ENCODE measurements at regions of chr2 and their contacts with region 1.

Region 1: GRCh38 chr2:240343176-240343947 is 92.1 kb upstream of the GPC1 start:
- DNase-seq: no peak
- H3K4me3 ChIP-seq: no peak overlapping the region
- H3K27ac ChIP-seq: no peak overlapping the region
- H3K4me1 ChIP-seq: no peaks in the 10 kb centered on the region
- H3K27me3 ChIP-seq: no peaks in the 10 kb centered on the region
- CTCF ChIP-seq: peak in 1 of 2 donors; percentile 16

Region 2: DNA sequence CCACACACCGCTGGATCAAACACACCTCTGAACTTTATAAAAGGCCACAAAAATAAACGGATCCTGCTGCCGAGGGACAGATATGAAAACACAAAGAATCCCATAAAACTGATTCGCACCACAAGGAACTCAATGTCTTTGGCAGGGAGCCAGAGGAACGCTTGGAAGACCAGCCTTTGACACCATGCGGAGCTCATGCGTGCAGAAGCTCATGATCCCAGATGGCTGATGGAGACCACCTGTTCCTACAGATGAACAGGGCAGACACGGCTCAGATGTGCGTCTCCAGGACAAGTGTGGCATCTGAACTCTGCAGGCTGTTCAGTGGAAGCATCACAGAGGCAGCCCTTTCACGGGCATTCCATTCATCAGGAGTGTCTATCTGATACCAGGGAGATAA is 232.1 kb before region 1 on chr2:
- CTCF ChIA-PET with region 1: no interaction called
- dilution Hi-C with region 1: no loop called
- in situ Hi-C with region 1: no loop called
- intact Hi-C with region 1: no loop called
- DNase-seq: no peak
- H3K4me3 ChIP-seq: no peak overlapping the region
- H3K27ac ChIP-seq: no peak overlapping the region
- H3K4me1 ChIP-seq: no peaks in the 10 kb centered on the region
- H3K27me3 ChIP-seq: peaks cover 4% of the 10 kb centered on the region
- CTCF ChIP-seq: no peak

Region 3: DNA sequence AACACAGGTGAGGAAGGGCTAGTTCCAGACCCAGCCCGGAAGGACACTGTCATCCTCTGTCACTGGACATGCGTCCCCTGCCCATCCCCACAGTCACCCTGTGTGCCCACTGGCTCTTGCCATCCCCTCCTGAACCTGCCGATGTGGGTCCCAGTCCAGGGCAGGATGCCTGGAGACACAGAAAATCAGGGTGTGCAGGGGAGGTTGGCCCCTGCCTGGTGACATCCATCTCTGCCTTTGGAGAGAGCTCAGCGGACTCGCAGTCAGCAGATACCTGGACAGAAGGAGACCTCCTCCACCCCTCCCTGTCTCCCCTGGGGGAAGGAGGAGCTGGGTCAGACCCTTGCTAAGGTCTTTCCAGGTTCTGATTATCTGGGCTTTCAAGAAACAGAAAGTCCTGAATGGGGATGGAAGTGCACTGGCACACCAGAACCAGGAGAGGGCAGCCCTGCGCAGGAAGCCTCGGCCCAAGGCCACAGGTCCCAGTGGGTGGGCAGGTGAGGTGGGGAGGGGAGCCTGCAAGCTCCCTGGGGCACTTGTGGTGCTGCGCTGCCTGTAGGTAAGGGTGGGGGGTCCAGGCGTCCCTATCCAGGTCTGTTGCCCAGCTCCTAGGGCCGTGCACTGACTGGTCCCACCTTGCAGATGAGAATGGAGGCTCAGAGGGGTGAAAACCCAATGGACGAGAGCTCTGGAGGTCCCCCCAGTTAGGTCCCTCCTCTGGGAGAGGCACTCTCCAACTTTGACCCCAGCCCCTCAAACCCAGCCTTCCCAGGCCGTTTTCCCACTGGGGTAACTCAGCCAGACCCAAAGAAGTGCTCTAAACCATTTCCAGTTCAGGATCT is 193.2 kb before region 1 on chr2:
- CTCF ChIA-PET with region 1: no interaction called
- dilution Hi-C with region 1: no loop called
- in situ Hi-C with region 1: no loop called
- intact Hi-C with region 1: loop called (anchors 2 kb)
- DNase-seq: no peak
- H3K4me3 ChIP-seq: no peak overlapping the region
- H3K27ac ChIP-seq: no peak overlapping the region
- H3K4me1 ChIP-seq: no peaks in the 10 kb centered on the region
- H3K27me3 ChIP-seq: peaks cover 3% of the 10 kb centered on the region
- CTCF ChIP-seq: peak; percentile 80 to 94

Region 4: DNA sequence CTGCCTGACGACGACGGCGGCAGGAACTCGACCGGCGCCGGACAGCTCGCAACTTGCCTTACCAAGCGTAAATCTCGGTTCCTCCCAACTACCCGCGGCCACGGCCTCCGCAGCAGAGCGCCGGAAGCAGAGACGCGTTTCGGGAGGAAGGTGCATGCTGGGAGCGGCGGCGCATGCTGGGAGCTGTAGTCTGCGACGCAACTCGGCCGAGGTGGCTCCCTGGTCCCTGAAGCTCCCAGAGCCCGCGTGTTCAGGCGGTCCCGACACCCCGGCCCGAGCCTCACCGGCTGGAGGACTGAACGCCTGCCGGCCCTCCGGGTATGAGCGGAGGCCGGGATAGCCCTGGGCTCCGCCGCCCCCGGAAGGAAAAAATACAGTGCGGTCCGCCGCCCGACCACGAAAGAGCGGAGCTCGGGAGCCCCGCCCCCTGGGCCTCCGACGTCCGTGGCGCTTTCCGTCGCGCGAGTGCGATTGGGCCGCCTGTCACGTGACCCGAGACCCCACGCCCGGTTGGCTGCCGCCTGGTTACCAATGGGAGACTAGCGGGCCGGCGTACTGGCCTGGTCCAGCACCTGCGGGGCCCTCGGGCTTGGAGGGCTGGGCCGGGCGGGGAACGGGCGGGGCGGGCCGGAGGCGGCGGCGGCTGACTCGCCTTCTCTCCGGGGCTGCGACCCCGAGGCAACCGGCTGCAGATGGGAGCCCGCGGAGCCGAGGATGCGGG is 243.0 kb after region 1 on chr2 and contains the start of gene CAPN10:
- CTCF ChIA-PET with region 1: no interaction called
- dilution Hi-C with region 1: no loop called
- in situ Hi-C with region 1: no loop called
- intact Hi-C with region 1: no loop called
- DNase-seq: peak; percentile 95
- H3K4me3 ChIP-seq: peak within 1 kb of the TSS; percentile 63 to 86 (median 67)
- H3K27ac ChIP-seq: peak within 1 kb of the TSS; percentile 75
- H3K4me1 ChIP-seq: peaks cover 47% of the 10 kb centered on the region
- H3K27me3 ChIP-seq: no peaks in the 10 kb centered on the region
- CTCF ChIP-seq: no peak
- total RNA-seq, gene CAPN10: 16.0 to 27.7 TPM